PC-9 (cell line): ENCODE measurements at regions of chr10 and their contacts with region 1.

Region 1: GRCh38 chr10:103592186-103593021 is 98.9 kb downstream of the NEURL1 start:
- DNase-seq: peak in 1 of 2 experiments; percentile 41
- H3K4me3 ChIP-seq: no peak overlapping the region
- H3K27ac ChIP-seq: no peak overlapping the region
- H3K4me1 ChIP-seq: no peaks in the 10 kb centered on the region; the same call in 1 of the 2 replicates
- H3K27me3 ChIP-seq: no peaks in the 10 kb centered on the region
- CTCF ChIP-seq: peak; percentile 74

Region 2: DNA sequence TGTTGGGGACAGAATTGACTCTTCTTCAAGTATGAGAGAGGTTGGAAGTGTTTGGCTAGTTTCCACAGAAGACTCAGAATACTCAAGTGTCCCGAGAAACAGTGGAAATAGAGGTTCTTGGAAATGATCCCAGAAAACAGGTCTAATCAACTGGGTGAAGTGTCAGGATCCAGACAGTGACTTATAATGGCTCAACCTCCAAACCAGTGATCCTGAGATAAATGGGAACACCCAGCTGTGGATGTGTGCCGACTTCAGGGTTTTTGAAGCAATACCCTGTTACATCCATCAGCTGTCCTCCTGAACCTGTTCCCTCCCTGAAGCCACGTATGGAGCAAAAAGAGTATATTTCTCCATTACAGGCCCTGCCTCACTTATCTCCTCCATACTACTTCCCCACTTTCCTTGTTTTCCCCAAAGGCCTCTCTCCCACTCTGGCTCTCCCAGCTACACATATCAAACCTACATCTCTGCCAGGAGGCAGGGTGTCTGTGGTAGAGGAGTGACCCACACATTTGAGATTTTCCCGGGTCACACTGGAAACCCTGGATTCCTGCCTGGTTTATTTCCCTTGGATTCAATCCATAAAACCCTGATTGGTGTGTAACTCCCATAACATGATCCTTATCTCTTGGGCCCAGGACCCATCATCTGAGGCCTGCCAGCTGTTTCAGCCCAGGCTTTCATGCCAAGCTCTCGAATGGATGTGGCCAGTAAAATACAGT is 1383.9 kb before region 1 on chr10:
- CTCF ChIA-PET with region 1: no interaction called
- POLR2A ChIA-PET with region 1: interaction called, 24 read pairs
- intact Hi-C with region 1: no loop called
- DNase-seq: no peak
- H3K4me3 ChIP-seq: no peak overlapping the region
- H3K27ac ChIP-seq: no peak overlapping the region
- H3K4me1 ChIP-seq: no peaks in the 10 kb centered on the region
- H3K27me3 ChIP-seq: no peaks in the 10 kb centered on the region
- CTCF ChIP-seq: no peak

Region 3: GRCh38 chr10:103416436-103417147 is 175.8 kb before region 1 on chr10:
- CTCF ChIA-PET with region 1: no interaction called
- POLR2A ChIA-PET with region 1: no interaction called
- intact Hi-C with region 1: loop called (anchors 1 kb)
- DNase-seq: peak; percentile 32 to 38
- H3K4me3 ChIP-seq: no peak overlapping the region
- H3K27ac ChIP-seq: no peak overlapping the region
- H3K4me1 ChIP-seq: no peaks in the 10 kb centered on the region
- H3K27me3 ChIP-seq: no peaks in the 10 kb centered on the region
- CTCF ChIP-seq: peak; percentile 74

Region 4: GRCh38 chr10:103491493-103492381 is 100.7 kb before region 1 on chr10:
- CTCF ChIA-PET with region 1: no interaction called
- POLR2A ChIA-PET with region 1: no interaction called
- intact Hi-C with region 1: loop called (anchors 5 kb)
- DNase-seq: peak; percentile 41 to 63
- H3K4me3 ChIP-seq: no peak overlapping the region
- H3K27ac ChIP-seq: no peak overlapping the region
- H3K4me1 ChIP-seq: peaks cover 5% of the 10 kb centered on the region; the same call in 1 of the 2 replicates
- H3K27me3 ChIP-seq: no peaks in the 10 kb centered on the region; the same call in 1 of the 2 replicates
- CTCF ChIP-seq: no peak

Region 5: GRCh38 chr10:103645141-103646054 is 53.0 kb after region 1 on chr10:
- CTCF ChIA-PET with region 1: no interaction called
- POLR2A ChIA-PET with region 1: no interaction called
- intact Hi-C with region 1: no loop called
- DNase-seq: no peak
- H3K4me3 ChIP-seq: no peak overlapping the region
- H3K27ac ChIP-seq: no peak overlapping the region
- H3K4me1 ChIP-seq: no peaks in the 10 kb centered on the region
- H3K27me3 ChIP-seq: no peaks in the 10 kb centered on the region
- CTCF ChIP-seq: no peak

Region 6: GRCh38 chr10:103859161-103860086 is 267.0 kb after region 1 on chr10:
- CTCF ChIA-PET with region 1: no interaction called
- POLR2A ChIA-PET with region 1: no interaction called
- intact Hi-C with region 1: loop called (anchors 10 kb)
- DNase-seq: peak in 1 of 2 experiments; percentile 50
- H3K4me3 ChIP-seq: no peak overlapping the region
- H3K27ac ChIP-seq: no peak overlapping the region
- H3K4me1 ChIP-seq: peaks cover 2% of the 10 kb centered on the region; the same call in 1 of the 2 replicates
- H3K27me3 ChIP-seq: no peaks in the 10 kb centered on the region
- CTCF ChIP-seq: peak; percentile 75